ENCODE measurements at regions of chr10 and their contacts with region 1.

Region 1: DNA sequence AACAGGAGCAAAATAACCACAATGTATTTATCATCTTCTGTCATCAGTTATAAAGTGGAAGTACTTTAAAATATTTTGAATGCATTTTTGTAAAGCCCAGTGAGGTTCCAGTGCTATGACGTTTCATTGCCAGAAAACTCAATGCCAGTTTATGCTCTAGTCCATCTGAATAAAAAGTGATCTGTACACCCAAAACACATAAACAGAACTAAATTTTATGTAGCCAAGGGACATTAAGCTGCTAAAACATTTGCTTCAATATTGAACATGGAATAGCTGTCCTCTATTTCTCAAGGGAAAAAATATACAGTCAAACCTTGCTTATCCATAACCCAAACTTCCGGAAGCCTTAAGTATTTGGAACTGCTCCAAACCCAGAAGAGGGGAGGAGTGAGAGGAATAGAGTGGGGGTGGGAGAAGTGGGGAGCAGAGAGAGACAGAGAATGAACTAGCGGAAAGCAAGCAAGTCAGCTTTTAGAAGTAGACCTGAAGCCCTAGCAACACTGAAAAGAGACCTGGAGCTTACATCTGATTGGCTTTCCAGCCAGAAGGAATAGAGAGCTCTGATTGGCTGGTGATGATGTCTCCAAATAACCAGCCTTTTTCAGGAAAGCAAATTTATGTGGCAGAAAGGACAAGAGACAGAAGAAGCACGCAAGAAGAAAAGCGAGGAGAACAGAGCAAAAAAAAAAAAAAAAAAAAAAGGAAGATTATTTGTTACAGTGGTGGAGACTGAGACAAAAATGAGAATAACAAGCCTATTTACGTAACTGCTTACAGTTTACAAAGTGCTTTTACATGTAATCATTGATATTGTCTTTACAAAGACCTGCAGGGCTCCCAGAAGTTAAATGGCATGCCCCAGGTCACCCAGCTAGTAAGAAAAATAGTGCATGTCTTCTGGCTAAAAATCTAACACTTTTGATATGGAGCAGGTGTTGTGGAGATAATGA is 196.0 kb downstream of the RNLS start:
- DNase-seq: no peak
- ATAC-seq: no peak
- H3K4me3 ChIP-seq: no peak overlapping the region
- H3K27ac ChIP-seq: no peak overlapping the region; the same call in 1 of the 2 replicates
- H3K4me1 ChIP-seq: peaks cover 11% of the 10 kb centered on the region
- H3K27me3 ChIP-seq: no peaks in the 10 kb centered on the region; the same call in 1 of the 2 replicates
- CTCF ChIP-seq: no peak

Region 2: GRCh38 chr10:88243836-88244730 is 143.0 kb before region 1 on chr10:
- CTCF ChIA-PET with region 1: no interaction called
- POLR2A ChIA-PET with region 1: no interaction called
- in situ Hi-C with region 1: no loop called
- intact Hi-C with region 1: loop called (anchors 5 kb)
- DNase-seq: no peak
- ATAC-seq: peak; percentile 89
- H3K4me3 ChIP-seq: peak overlapping the region in 1 of 2 experiments; percentile 7; a peak in 2 of 4 replicates
- H3K27ac ChIP-seq: peak overlapping the region; percentile 75
- H3K4me1 ChIP-seq: peaks cover 20% of the 10 kb centered on the region
- H3K27me3 ChIP-seq: no peaks in the 10 kb centered on the region; the same call in 1 of the 2 replicates
- CTCF ChIP-seq: no peak

Region 3: DNA sequence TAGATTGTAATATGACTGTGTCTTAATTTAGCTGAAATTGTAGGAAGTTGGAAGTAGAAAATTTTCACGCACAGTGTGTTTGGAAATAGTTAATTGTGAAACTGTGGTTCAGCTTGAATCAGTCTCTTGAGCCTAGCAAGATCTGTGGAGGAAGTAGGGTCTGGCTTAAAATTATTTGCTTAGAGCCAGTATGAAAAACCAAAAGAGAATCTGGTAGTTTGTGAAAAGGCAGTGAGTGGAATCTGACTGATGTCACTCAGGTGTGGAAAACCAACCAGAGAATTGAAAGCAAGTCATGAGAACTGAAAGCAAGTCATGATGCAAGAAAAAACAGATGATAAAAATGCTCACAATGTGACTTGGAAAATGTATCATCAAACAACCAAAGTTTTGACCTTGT is 211.0 kb after region 1 on chr10:
- CTCF ChIA-PET with region 1: no interaction called
- POLR2A ChIA-PET with region 1: no interaction called
- in situ Hi-C with region 1: no loop called
- intact Hi-C with region 1: no loop called
- DNase-seq: no peak
- ATAC-seq: no peak
- H3K4me3 ChIP-seq: no peak overlapping the region
- H3K27ac ChIP-seq: no peak overlapping the region
- H3K4me1 ChIP-seq: no peaks in the 10 kb centered on the region
- H3K27me3 ChIP-seq: no peaks in the 10 kb centered on the region
- CTCF ChIP-seq: no peak